Calu3 (cell line): ENCODE measurements at regions of chr9 and their contacts with region 1.

Region 1: DNA sequence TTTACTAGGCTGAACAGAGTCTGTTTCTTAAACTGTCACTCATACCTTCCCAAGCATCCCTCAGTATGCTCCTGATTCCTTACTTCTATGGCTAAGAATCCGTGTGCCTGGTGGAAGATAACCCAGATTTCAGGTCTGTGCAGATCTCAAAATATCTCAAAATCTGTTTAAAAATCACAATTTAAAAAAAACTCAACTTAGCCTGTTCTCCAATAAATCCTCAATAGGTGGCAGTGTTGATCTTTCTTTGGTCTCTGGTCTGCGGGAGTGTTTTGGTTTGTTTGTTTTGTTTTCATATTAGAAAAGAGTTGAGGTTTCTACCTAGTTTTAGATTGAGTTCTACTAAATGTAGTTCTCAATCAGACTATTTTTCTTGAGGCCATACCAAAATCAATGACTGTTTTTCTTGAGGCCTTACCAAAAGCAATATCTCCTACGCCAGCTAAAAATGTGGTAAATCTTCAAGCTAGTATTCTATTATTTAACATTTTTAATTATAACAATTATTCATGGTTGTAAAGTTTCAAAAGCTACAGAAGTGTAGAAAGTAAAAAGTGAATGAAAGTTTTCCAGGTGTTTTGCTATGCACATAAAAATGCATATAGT is 57.9 kb downstream of the TGFBR1 start:
- DNase-seq: no peak
- H3K4me3 Mint-ChIP-seq: no peak overlapping the region
- H3K27ac Mint-ChIP-seq: no peak overlapping the region
- H3K4me1 Mint-ChIP-seq: no peaks in the 10 kb centered on the region
- H3K27me3 Mint-ChIP-seq: peaks cover 5% of the 10 kb centered on the region
- CTCF ChIP-seq: peak; percentile 19

Region 2: DNA sequence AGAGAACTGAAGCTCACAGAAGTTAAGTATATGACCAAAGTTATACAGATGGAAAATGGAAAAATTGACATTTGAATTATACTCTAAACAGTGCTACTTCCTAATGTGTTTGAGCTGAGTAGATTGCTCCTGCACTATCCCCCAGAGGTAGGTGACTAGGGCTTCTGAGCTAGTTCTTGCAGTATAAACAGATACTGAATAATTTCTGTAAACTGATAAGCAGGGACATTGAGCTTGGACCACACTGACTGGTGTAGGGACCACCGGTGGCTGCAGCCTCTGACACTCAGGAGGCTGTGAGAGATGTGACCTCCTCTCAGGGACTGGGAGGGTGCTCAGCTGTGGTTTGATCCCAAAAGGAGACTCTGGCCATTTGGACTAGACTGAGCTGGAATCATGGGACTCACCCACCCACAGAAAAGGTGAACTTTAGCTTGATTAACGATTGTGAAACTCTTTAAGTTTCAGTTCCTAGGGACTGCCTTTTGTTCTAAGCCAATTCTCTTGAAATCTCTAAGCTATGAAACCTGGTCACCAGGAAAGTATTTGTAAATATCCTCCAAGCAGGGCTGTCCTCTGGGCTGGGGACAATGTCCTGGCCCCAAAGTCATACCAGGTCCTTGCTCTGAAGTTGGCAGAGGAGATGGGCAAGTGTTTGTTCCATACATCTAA is 350.7 kb after region 1 on chr9:
- CTCF ChIA-PET with region 1: no interaction called
- intact Hi-C with region 1: loop called (anchors 5 kb)
- DNase-seq: no peak
- H3K4me3 Mint-ChIP-seq: no peak overlapping the region
- H3K27ac Mint-ChIP-seq: no peak overlapping the region
- H3K4me1 Mint-ChIP-seq: no peaks in the 10 kb centered on the region
- H3K27me3 Mint-ChIP-seq: no peaks in the 10 kb centered on the region
- CTCF ChIP-seq: no peak